Activated naive CD4-positive, alpha-beta T cell treated with anti-CD3 and anti-CD28 coated beads for 36 hours (primary cell): ENCODE measurements at regions of chr15 and their contacts with region 1.

Region 1: GRCh38 chr15:74635228-74635627 is 19.6 kb downstream of the CLK3 start:
- DNase-seq: peak; percentile 86
- H3K4me3 Mint-ChIP-seq: no peak overlapping the region
- H3K27ac Mint-ChIP-seq: no peak overlapping the region
- H3K4me1 Mint-ChIP-seq: no peaks in the 10 kb centered on the region
- H3K27me3 Mint-ChIP-seq: no peaks in the 10 kb centered on the region

Region 2: DNA sequence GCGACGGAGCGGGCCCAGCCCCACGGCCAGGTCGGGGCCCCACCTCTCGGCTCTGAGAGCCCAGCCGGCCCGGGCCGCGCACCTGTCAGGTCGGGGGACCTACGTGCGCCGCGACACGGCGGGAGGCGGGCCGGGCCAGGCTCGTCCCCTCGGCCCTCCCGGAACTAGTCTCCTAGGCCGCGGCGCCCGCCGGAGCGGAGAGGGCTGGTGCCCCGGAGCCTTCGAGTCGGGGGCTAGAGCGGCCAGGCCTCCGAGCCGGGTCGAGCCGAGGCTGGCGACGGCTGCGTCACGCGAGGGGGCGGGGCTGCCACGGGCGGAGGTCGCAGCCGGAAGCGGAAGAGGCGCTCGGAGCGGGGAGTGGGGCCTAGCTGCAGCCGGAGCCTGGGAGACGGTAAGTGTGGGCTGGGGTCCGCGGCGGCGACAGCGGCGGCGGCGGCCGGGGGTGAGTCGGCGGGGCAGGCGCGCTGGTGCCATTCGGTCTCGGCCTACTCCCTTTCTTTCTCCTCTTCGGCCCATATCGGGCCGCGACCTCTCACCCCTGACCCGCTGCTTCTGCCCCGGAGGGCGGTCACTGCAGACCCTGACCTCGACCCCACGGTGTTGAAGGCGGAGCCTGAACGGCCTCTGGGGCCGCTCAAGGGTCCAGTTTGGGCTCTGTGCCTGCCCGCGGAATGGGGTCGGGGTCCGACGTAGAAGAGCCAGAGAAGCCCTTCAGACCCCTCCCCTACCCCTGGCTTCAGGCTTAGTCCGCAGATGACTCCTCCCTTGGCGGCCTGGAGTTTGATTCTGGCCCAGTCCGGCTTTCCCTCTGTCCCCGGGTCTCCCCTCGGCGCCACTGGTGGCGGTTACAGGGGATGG is 19.5 kb before region 1 on chr15 and contains the start of gene CLK3:
- CTCF ChIA-PET with region 1: interaction called, 180 read pairs
- intact Hi-C with region 1: no loop called
- DNase-seq: peak; percentile 97
- H3K4me3 Mint-ChIP-seq: peak within 1 kb of the TSS; percentile 90
- H3K27ac Mint-ChIP-seq: peak within 1 kb of the TSS; percentile 95
- H3K4me1 Mint-ChIP-seq: peaks cover 39% of the 10 kb centered on the region
- H3K27me3 Mint-ChIP-seq: no peaks in the 10 kb centered on the region
- total RNA-seq, gene CLK3: 124 TPM

Region 3: DNA sequence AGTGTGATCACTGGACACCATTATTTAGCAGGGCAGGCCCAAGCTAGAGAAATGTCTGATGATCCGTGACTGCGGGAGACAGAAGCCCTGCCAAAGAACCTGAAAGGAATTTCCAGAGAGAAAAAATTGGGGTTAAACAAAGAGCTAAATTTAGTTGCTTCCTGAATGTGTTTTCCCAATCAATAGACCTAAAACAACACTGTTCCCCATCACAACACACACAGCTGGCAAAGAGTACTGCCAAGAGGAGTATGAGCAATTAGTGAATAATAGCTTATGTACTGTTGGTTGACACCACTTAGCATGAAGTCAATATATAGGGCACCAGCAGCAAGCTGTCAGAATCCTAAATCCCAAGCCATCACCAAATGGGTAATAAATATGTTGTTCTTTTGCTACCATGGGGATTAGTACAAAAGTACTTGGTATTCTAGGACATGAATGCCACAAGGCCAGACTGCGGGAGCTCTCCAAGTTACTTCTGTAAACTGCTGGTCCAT is 16.1 kb after region 1 on chr15:
- CTCF ChIA-PET with region 1: interaction called, 23 read pairs
- intact Hi-C with region 1: no loop called
- DNase-seq: no peak
- H3K4me3 Mint-ChIP-seq: no peak overlapping the region
- H3K27ac Mint-ChIP-seq: no peak overlapping the region
- H3K4me1 Mint-ChIP-seq: peaks cover 8% of the 10 kb centered on the region
- H3K27me3 Mint-ChIP-seq: no peaks in the 10 kb centered on the region

Region 4: DNA sequence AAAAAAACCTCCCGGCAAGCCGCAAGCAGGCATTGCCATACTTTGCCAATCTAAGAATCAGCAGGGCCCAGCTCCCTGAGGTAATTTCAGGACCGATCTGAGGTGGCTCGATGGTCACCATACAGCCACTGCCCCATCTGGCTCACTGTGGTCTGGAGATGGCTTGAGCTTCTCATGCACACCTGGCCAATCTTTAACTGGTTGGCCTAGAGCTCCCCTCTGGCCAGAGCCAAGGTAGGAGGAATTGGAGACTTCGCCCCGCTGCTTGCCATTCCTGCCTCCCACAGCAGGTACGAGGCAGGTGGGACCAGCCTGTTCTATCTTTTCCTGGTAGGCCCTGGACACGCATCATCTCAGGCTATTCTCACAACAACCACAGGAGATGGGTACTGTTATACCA is 123.5 kb after region 1 on chr15:
- CTCF ChIA-PET with region 1: interaction called, 10 read pairs
- intact Hi-C with region 1: no loop called
- DNase-seq: no peak
- H3K4me3 Mint-ChIP-seq: no peak overlapping the region
- H3K27ac Mint-ChIP-seq: no peak overlapping the region
- H3K4me1 Mint-ChIP-seq: no peaks in the 10 kb centered on the region
- H3K27me3 Mint-ChIP-seq: peaks cover 2% of the 10 kb centered on the region

Region 5: GRCh38 chr15:74835307-74835823 is 200.1 kb after region 1 on chr15:
- CTCF ChIA-PET with region 1: interaction called, 3 read pairs
- intact Hi-C with region 1: loop called (anchors 2 kb)
- DNase-seq: peak; percentile 72
- H3K4me3 Mint-ChIP-seq: no peak overlapping the region
- H3K27ac Mint-ChIP-seq: no peak overlapping the region
- H3K4me1 Mint-ChIP-seq: peaks cover 3% of the 10 kb centered on the region
- H3K27me3 Mint-ChIP-seq: no peaks in the 10 kb centered on the region

Region 6: GRCh38 chr15:74950078-74951000 is 315.1 kb after region 1 on chr15:
- CTCF ChIA-PET with region 1: interaction called, 23 read pairs
- intact Hi-C with region 1: loop called (anchors 1 kb)
- DNase-seq: peak; percentile 92
- H3K4me3 Mint-ChIP-seq: no peak overlapping the region
- H3K27ac Mint-ChIP-seq: no peak overlapping the region
- H3K4me1 Mint-ChIP-seq: peaks cover 10% of the 10 kb centered on the region
- H3K27me3 Mint-ChIP-seq: no peaks in the 10 kb centered on the region